H1 (cell line): ENCODE measurements at regions of chr4 and their contacts with region 1.

Region 1: DNA sequence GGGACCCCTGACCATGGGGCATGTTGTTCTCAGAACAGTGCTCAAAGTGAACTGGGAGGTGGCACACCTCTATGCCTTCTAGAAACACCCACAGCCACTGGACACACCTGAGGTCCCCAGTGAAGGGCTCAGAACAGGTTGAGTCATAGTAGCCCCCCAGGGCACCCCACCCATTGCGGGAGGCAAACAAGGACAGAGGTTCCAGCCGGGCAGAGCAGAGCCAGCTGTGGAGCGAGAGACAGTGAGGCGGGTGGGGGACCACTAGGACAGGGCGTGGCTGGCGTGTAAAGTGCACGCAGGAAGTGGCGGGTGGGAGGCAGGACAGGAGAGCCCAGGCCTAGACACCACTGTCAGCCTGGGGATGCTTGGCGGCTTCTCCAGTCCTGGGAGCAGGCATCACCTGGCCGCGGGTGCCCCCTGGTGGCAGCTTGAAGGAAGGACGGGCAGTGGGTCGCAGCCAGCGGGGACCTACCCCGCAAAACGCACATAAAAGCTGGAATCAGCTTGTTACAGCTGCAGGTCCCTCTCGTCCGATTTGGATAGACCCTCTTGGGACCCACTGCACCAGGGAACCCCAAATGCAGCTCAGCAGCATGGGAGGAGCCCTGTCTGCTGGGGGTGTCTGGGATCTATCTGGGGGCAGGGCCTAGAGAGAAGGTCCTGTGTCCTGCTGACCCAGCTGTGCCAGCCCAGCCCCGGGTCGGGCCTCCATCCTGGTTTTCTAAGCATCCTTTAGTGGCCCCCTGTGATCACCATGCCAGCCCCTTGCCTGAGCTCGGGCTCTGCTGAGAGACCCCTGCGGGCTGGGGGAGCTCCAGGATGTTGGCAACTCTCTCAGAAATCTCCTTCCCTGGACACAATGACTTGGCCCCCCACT is 57.6 kb downstream of the WFS1 start:
- DNase-seq: peak; percentile 38 to 98
- H3K4me3 ChIP-seq: no peak overlapping the region
- H3K27ac ChIP-seq: no peak overlapping the region
- H3K4me1 ChIP-seq: peaks cover 0 to 8% (median 3%) of the 10 kb centered on the region in 4 experiments; a peak in 3 of 7 replicates
- H3K27me3 ChIP-seq: no peaks in the 10 kb centered on the region
- CTCF ChIP-seq: peak in 2 of 3 experiments; percentile 97 to 98; a peak in 3 of 4 replicates
- EP300 ChIP-seq: no peak
- POLR2A ChIP-seq: no peak
- RAD21 ChIP-seq: peak; percentile 95 to 98

Region 2: GRCh38 chr4:6134612-6135220 is 192.6 kb before region 1 on chr4:
- CTCF ChIA-PET with region 1: interaction called, 11 read pairs
- POLR2A ChIA-PET with region 1: no interaction called
- DNase-seq: no peak
- H3K4me3 ChIP-seq: no peak overlapping the region
- H3K27ac ChIP-seq: no peak overlapping the region
- H3K4me1 ChIP-seq: peaks cover 0 to 3% (median 3%) of the 10 kb centered on the region in 4 experiments; a peak in 3 of 7 replicates
- H3K27me3 ChIP-seq: no peaks in the 10 kb centered on the region; a peak in 1 of 7 replicates
- CTCF ChIP-seq: peak; percentile 47 to 97 (median 65)
- EP300 ChIP-seq: no peak
- POLR2A ChIP-seq: no peak
- RAD21 ChIP-seq: peak; percentile 51 to 64; a peak in 3 of 4 replicates

Region 3: GRCh38 chr4:6269616-6270511 is 57.4 kb before region 1 on chr4 and contains the start of gene WFS1:
- CTCF ChIA-PET with region 1: interaction called, 908 read pairs
- POLR2A ChIA-PET with region 1: interaction called, 3 read pairs
- DNase-seq: peak; percentile 90 to 98
- H3K4me3 ChIP-seq: peak within 1 kb of the TSS; percentile 49 to 94 (median 74)
- H3K27ac ChIP-seq: no peak within 1 kb of the TSS
- H3K4me1 ChIP-seq: peaks cover 4 to 21% (median 9%) of the 10 kb centered on the region in 4 experiments
- H3K27me3 ChIP-seq: peaks cover 0 to 4% (median 0%) of the 10 kb centered on the region in 4 experiments; a peak in 1 of 7 replicates
- CTCF ChIP-seq: no peak
- EP300 ChIP-seq: no peak
- POLR2A ChIP-seq: peak in 1 of 2 experiments; percentile 63; a peak in 2 of 3 replicates
- RAD21 ChIP-seq: no peak
- total RNA-seq, gene WFS1: 29.1 and 34.0 TPM in 2 replicates

Region 4: DNA sequence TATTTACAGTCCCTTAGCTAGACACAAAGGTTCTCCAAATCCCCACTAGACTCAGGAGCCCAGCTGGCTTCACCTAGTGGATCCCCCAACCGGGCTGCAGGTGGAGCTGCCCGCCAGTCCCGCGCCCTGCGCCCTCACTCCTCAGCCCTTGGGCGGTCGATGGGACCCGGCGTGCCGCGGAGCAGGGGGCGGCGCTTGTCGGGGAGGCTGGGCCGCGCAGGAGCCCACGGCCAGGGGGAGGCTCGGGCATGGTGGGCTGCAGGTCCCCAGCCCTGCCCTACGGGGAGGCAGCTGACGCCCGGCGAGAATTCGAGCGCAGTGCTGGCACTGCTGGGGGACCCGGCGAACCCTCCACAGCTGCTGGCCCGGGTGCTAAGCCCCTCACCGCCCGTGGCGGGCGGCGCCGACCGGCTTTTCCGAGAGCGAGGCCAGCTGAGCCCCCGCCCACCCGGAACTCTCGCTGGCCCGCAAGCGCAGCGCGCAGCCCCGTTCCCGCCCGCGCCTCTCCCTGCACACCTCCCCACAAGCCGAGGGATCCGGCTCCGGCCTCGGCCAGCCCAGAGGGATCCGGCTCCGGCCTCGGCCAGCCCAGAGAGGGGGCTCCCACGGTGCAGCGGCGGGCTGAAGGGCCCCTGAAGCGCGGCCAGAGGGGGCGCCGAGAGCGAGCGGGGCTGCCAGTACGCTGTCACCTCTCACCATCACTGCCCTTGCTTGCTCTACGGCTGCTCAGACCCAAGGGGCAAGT is 18.2 kb before region 1 on chr4:
- CTCF ChIA-PET with region 1: interaction called, 25 read pairs
- POLR2A ChIA-PET with region 1: interaction called, 3 read pairs
- DNase-seq: peak in 1 of 2 experiments; percentile 84
- H3K4me3 ChIP-seq: peak overlapping the region in 1 of 4 experiments; percentile 49; a peak in 2 of 8 replicates
- H3K27ac ChIP-seq: no peak overlapping the region
- H3K4me1 ChIP-seq: no peaks in the 10 kb centered on the region
- H3K27me3 ChIP-seq: no peaks in the 10 kb centered on the region; a peak in 1 of 7 replicates
- CTCF ChIP-seq: 0 out of 4 replicates have a peak, but pooled peaks of 1 of the 3 experiments have one; percentile 14
- EP300 ChIP-seq: no peak
- POLR2A ChIP-seq: no peak
- RAD21 ChIP-seq: no peak

Region 5: GRCh38 chr4:6362896-6363295 is 35.6 kb after region 1 on chr4:
- CTCF ChIA-PET with region 1: interaction called, 72 read pairs
- POLR2A ChIA-PET with region 1: no interaction called
- DNase-seq: peak in 1 of 2 experiments; percentile 87
- H3K4me3 ChIP-seq: no peak overlapping the region
- H3K27ac ChIP-seq: no peak overlapping the region
- H3K4me1 ChIP-seq: peaks cover 3 to 7% (median 5%) of the 10 kb centered on the region in 4 experiments; a peak in 5 of 7 replicates
- H3K27me3 ChIP-seq: 0 out of 7 replicates have a peak, but pooled peaks cover 0 to 2% (median 0%) of the 10 kb centered on the region in 4 experiments
- CTCF ChIP-seq: no peak
- EP300 ChIP-seq: no peak
- POLR2A ChIP-seq: no peak
- RAD21 ChIP-seq: no peak

Region 6: DNA sequence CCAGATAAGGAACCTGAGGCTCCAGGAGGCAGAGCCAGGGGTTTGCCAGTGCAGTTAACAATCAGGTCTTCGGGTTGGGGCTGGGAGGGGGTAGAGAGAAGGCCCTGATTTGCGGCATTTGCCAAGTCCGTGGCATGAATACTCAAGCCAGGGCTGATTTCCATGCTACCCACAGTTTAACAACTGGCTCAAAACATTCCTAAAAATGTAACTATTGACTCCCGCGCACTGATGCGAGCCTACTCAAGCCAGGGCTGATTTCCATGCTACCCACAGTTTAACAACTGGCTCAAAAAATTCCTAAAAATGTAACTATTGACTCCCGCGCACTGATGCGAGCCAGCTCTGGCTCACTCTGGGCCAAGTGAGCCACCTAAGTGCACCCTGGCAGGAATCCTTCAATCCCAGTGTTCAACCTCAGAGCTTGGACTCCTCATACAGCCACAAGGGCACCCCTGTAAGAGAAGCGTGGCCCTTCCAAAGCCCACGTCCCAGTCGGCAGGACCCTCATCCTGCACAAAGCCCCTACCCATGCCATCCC is 69.5 kb after region 1 on chr4:
- CTCF ChIA-PET with region 1: interaction called, 31 read pairs
- POLR2A ChIA-PET with region 1: no interaction called
- DNase-seq: no peak
- H3K4me3 ChIP-seq: no peak overlapping the region
- H3K27ac ChIP-seq: no peak overlapping the region
- H3K4me1 ChIP-seq: peaks cover 0 to 2% (median 0%) of the 10 kb centered on the region in 4 experiments; a peak in 2 of 7 replicates
- H3K27me3 ChIP-seq: no peaks in the 10 kb centered on the region
- CTCF ChIP-seq: no peak
- EP300 ChIP-seq: no peak
- POLR2A ChIP-seq: no peak
- RAD21 ChIP-seq: no peak

Region 7: GRCh38 chr4:6546681-6547447 is 219.6 kb after region 1 on chr4:
- CTCF ChIA-PET with region 1: interaction called, 48 read pairs
- POLR2A ChIA-PET with region 1: no interaction called
- DNase-seq: peak; percentile 39 to 69
- H3K4me3 ChIP-seq: no peak overlapping the region
- H3K27ac ChIP-seq: no peak overlapping the region
- H3K4me1 ChIP-seq: no peaks in the 10 kb centered on the region
- H3K27me3 ChIP-seq: no peaks in the 10 kb centered on the region; a peak in 1 of 7 replicates
- CTCF ChIP-seq: peak; percentile 80 to 93 (median 85)
- EP300 ChIP-seq: 0 out of 3 replicates have a peak, but pooled peaks of 1 of the 2 experiments have one; percentile 13
- POLR2A ChIP-seq: no peak
- RAD21 ChIP-seq: peak; percentile 67 to 80